ENCODE measurements at regions of chr7 and their contacts with region 1.

Region 1: GRCh38 chr7:70693686-70694360 is 438.1 kb upstream of the GALNT17 start:
- DNase-seq: peak; percentile 85
- H3K4me3 ChIP-seq: peak overlapping the region; percentile 52 to 94 (median 85)
- H3K27ac ChIP-seq: peak overlapping the region; percentile 85 to 94 (median 92)
- H3K4me1 ChIP-seq: peaks cover 0 to 27% (median 3%) of the 10 kb centered on the region in 4 donors
- H3K27me3 ChIP-seq: peaks cover 16% of the 10 kb centered on the region
- CTCF ChIP-seq: peak; percentile 26 to 78 (median 35)
- EP300 ChIP-seq: no peak
- POLR2A ChIP-seq: peak; percentile 69

Region 2: DNA sequence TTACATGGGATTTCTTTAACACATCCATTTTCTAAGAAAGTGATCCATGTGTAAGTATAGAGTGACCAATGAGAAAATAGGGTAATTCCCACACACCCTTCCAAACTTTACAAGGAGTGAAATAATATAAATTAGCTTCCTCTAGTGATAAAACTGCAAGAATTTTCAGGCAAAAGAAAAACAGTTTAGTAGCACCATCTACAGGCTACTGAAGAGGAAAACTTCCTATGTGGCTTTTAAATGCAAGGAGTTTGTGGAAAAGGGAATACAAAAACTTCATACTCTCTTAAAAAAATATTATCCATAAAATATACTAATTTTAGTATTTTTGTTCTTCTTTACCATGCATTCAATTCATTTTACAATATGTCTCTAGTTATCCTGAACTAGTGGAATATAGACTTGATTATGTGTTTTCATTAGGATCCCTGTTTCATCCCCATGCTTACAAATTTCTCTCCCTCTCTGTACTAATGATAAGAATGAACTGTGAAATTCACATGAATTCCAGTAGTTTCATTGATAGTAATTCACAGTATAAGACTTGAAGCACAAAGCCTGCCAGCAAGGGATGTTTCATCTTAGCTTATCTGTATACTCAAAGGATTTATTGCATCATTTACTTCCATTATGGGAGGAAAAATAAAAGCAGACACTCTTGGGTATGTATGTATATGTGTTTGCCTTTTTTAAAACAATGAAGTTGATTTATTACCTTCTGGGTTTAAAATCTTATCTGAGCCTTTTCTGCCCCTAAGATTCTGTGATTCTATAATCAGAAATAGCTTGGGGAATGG is 652.7 kb before region 1 on chr7:
- in situ Hi-C with region 1: loop called in 1 of 4 experiments (anchors 25 kb)
- intact Hi-C with region 1: loop called (anchors 5 kb)
- DNase-seq: no peak
- H3K4me3 ChIP-seq: no peak overlapping the region
- H3K27ac ChIP-seq: no peak overlapping the region
- H3K4me1 ChIP-seq: peaks cover 0 to 17% (median 5%) of the 10 kb centered on the region in 4 donors
- H3K27me3 ChIP-seq: no peaks in the 10 kb centered on the region
- CTCF ChIP-seq: peak in 2 of 5 experiments; percentile 27 to 31
- EP300 ChIP-seq: no peak
- POLR2A ChIP-seq: no peak

Region 3: GRCh38 chr7:70154521-70155180 is 539.2 kb before region 1 on chr7:
- in situ Hi-C with region 1: loop called in 1 of 4 experiments (anchors 25 kb)
- intact Hi-C with region 1: no loop called
- DNase-seq: no peak
- H3K4me3 ChIP-seq: no peak overlapping the region
- H3K27ac ChIP-seq: no peak overlapping the region
- H3K4me1 ChIP-seq: no peaks in the 10 kb centered on the region
- H3K27me3 ChIP-seq: no peaks in the 10 kb centered on the region
- CTCF ChIP-seq: no peak
- EP300 ChIP-seq: no peak
- POLR2A ChIP-seq: no peak

Region 4: DNA sequence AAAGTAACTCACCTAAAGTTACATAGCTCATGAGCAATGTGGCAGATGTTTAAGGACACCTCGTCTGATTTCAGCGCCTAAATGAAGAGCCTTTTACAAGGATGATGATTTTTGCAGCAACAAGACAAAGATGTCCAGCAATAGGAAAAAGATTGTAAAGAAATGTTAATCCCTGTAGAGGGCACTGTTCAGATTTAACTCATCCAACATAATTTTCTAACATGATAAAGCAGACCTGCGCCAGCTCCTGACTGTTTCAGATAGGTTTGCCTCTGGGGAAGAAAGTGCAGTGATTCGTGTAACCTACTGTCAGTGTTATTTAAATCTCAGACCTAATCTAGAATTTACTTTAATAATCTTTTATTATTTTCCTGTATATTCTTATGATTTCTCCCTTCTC is 500.3 kb before region 1 on chr7:
- in situ Hi-C with region 1: loop called in 2 of 4 experiments (anchors 25 kb)
- intact Hi-C with region 1: no loop called
- DNase-seq: peak; percentile 11
- H3K4me3 ChIP-seq: no peak overlapping the region
- H3K27ac ChIP-seq: no peak overlapping the region
- H3K4me1 ChIP-seq: no peaks in the 10 kb centered on the region
- H3K27me3 ChIP-seq: no peaks in the 10 kb centered on the region
- CTCF ChIP-seq: peak; percentile 16 to 34 (median 30)
- EP300 ChIP-seq: no peak
- POLR2A ChIP-seq: no peak

Region 5: DNA sequence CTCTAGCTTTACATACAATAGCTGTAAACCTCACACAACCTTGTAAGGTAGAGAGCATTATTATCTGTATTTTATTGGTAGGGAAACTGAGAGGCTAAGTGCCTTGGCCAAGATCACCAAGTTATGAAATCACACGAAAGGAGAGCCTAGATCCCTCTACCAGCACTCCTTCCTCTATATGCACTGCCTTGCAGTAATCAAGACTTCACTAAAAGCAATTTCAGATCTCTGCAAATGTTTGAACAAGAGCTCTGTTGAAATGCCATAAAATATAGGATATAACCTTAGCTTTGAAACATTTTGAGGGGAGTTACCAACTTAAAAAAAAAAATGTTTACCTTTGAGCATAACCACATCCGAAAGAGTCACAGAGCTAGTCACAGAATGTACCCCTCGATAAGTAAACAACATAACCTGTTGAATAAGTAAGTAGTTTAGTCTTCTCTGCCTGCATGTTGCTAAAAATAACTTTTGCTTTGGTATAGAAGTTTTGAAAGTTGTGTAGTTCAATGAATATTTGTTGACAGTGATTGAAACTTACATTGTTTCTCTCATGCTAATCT is 386.2 kb before region 1 on chr7:
- in situ Hi-C with region 1: no loop called
- intact Hi-C with region 1: no loop called
- DNase-seq: no peak
- H3K4me3 ChIP-seq: no peak overlapping the region
- H3K27ac ChIP-seq: peak overlapping the region; percentile 2 to 26 (median 10)
- H3K4me1 ChIP-seq: peaks cover 0 to 15% (median 0%) of the 10 kb centered on the region in 4 donors
- H3K27me3 ChIP-seq: no peaks in the 10 kb centered on the region
- CTCF ChIP-seq: no peak
- EP300 ChIP-seq: no peak
- POLR2A ChIP-seq: no peak

Region 6: DNA sequence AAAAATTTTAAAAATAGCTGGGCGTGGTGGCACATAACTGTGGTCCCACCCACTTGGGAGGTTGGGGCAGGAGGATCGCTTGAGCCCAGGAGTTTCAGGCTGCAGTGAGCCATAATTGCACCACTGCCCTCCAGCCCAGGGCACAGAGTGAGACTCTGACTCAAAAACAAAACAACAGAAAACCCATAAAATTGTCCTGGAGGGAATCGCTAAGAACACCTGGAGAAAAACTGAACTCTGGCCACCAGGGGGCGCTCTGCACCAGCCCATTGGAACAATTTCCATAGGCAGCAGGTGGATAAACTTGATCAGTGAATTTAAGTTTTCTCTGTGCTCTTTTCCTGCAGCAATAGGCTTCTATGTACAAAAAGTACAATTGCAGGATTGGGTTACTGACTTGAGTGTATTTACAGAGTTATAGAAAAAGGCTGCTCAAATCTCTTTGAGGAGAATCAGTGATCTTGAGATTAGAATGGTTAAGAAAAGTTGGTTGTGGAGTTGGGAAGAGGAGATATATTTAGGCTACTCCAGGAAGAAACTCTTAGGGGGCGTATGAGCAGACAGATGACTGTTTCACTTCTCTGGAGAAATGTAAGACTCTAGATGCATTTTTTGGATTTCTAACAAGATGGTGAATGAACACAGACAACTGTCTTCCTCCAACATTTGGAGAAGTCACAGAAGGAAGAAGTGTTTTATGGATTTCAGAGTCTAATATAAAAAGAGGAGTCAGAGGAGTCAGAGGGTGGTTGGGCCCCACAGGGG is 163.2 kb after region 1 on chr7:
- in situ Hi-C with region 1: no loop called
- intact Hi-C with region 1: no loop called
- DNase-seq: peak; percentile 60
- H3K4me3 ChIP-seq: no peak overlapping the region
- H3K27ac ChIP-seq: no peak overlapping the region
- H3K4me1 ChIP-seq: no peaks in the 10 kb centered on the region
- H3K27me3 ChIP-seq: no peaks in the 10 kb centered on the region
- CTCF ChIP-seq: peak; percentile 74 to 90 (median 88)
- EP300 ChIP-seq: no peak
- POLR2A ChIP-seq: no peak